Motor neuron (in vitro differentiated cells): ENCODE measurements at regions of chr1 and their contacts with region 1.

Region 1: DNA sequence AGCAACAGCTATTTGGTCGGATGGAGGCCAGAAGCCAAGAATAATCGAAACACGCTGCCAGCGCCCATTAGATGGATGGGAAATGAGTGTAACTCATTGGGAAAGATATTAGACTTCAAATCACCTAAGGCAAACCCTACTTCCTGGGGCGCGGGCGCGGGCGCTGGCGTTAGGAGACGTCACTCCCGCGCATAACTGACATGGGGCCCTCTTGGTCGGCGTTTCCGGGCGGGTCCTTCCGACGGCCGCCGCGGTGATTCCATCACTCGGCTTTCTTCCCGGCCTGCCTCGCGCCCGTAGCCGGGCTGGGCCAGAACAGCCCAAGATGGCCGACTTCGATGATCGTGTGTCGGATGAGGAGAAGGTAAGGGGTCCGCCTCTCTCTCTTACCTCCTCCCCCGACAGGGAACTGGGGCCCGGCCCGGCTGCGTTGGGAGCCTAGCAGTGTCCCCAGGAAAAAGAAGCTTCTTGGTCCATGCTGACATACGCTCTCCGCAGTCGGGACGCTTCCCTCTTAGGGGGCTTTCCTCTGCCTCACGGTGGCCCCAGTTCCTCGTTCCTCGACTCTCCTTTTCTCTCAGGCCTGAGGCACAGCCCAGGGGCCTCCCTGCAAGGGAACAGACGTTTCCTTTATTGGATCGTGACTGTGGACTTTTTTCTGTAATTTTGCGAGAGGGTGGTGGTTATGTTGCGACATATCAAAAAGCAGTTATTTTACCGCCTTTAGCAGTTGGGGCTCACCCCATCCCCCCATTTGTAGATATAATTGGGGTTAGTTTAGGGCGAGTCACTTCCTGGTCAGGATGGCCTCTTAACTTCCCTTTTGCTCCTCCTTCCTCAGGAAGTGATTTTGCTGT is at the start of gene CAPZA1:
- ATAC-seq: peak; percentile 84 to 96 (median 95)
- H3K4me3 ChIP-seq: peak within 1 kb of the TSS; percentile 84 to 97 (median 94)
- H3K27ac ChIP-seq: peak within 1 kb of the TSS; percentile 95 to 98
- H3K4me1 ChIP-seq: peaks cover 18 to 24% of the 10 kb centered on the region in 2 donors
- total RNA-seq, gene CAPZA1: 119 to 210 (median 162) TPM

Region 2: DNA sequence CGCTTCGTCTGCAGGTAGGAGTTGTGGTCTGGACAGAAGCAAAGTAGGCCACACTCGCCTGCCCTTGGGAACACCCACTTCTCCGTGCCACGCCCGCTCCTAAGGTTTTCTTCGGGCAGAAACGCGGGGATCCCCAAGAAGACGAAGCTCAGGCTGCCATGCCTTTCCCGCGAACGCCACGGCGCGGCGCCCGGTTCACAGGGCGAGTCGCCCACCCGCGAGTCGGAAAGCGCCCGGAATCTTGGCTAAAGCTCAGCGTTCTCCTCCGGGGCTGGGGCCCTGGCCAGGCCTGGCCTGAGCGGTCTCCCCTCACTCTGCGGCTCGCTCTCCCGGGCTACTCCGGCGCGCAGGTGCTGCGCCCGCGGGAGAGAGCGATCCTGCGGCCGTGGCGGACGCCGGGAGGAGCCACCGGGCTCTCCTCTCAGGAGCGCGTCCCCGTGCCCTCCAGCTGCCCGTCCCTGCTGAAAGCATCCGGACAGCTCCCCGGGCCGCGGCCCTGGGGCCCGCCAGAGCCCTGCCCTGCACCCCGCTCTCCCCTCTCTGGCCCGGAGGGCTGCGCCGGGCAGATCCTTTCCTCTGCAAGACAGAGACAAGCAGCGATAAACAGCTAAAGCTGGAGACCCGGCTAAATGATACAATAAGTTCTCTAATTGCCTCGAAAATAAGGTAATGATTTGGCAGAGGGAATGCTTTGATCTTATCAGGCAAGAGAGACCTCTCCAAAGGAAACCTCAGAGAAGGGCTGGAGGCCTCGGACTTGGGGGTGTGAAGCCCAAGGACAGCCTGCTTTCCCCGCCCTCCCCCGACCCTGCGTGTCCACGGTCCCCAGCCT is 117.7 kb before region 1 on chr1:
- in situ Hi-C with region 1: loop called in 1 of 9 experiments (anchors 25 kb)
- ATAC-seq: peak; percentile 78 to 96 (median 93)
- H3K4me3 ChIP-seq: peak overlapping the region; percentile 36 to 45 (median 41)
- H3K27ac ChIP-seq: no peak overlapping the region
- H3K4me1 ChIP-seq: peaks cover 3 to 6% of the 10 kb centered on the region in 2 donors